ENCODE measurements at regions of chr11 and their contacts with region 1.

Region 1: GRCh38 chr11:73965076-73965860 is 14.4 kb downstream of the DNAJB13 start:
- DNase-seq: no peak
- ATAC-seq: no peak
- H3K4me3 Mint-ChIP-seq: peak overlapping the region in 2 of 10 donors; percentile 60 to 64
- H3K27ac Mint-ChIP-seq: peak overlapping the region in 8 of 10 donors; percentile 15 to 94 (median 66)
- H3K4me1 Mint-ChIP-seq: peaks cover 25 to 53% (median 45%) of the 10 kb centered on the region in 4 donors
- H3K27me3 Mint-ChIP-seq: no peaks in the 10 kb centered on the region

Region 2: DNA sequence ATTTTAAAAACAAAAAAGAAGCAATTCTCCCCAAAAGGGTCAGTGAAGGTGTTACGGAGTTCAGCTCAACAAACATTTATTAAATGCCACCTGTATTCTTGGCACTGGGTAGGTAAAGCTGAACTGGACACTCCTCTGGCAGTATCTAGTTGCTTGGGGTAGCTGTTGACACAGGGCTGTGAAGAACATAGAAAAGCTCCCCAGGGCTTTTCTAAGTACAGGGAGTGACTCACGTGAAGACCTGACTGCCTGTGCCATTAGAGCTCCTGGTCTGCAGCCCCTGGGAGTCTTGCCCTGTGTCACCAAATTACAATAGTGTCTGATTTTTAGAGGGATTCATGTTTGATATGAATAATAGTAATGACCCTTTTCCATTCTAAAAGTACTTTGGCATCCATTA is 132.2 kb before region 1 on chr11:
- POLR2A ChIA-PET with region 1: no interaction called
- DNase-seq: no peak
- ATAC-seq: no peak
- H3K4me3 Mint-ChIP-seq: no peak overlapping the region
- H3K27ac Mint-ChIP-seq: no peak overlapping the region
- H3K4me1 Mint-ChIP-seq: no peaks in the 10 kb centered on the region
- H3K27me3 Mint-ChIP-seq: no peaks in the 10 kb centered on the region

Region 3: DNA sequence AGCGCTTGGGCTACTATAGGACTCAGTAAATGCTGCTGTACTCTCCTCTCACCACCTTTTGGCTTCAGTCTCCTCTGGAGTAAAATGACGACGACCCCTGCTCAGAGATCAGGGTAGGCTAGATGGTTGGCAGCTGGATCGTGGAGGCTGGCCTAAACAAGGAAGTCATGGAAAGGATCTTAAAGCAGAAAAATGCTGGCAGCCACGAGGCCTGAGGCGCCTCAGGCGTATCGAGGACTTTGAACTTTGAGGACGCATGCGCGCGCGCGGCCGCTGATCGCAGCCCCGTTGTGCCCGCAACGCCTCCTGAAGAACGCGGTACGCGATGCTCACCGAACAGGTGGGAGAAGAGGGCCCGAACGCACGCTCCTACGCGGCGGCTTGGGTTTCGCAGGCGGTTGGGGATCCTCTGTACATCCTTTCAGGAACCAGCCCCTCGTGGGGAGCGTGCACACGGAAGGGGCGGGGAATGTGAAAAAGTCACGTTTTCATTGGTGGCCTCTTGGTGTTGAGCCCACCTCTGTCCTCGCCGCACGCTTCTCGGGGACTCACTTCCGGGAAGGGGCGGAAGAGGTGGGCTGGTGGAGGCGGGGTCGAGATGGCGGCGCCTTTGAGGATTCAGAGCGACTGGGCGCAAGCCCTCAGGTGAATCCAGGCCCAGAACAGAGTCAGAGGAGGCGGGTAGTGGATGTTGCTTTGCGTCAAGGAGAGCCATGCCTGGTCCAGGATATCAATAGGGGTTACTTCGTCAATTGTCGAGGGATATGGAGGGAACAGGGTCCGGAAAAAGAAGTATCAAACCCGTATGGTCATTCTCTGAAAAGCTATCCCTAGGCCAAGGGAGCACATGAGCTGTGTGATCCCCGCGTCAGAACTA is 88.6 kb before region 1 on chr11 and contains the starts of genes COA4 and PAAF1:
- POLR2A ChIA-PET with region 1: no interaction called
- DNase-seq: peak; percentile 85 to 96 (median 92)
- ATAC-seq: peak; percentile 96 to 97
- H3K4me3 Mint-ChIP-seq: peak within 1 kb of the TSS; percentile 93 to 99 (median 98)
- H3K27ac Mint-ChIP-seq: peak within 1 kb of the TSS; percentile 93 to 99 (median 98)
- H3K4me1 Mint-ChIP-seq: peaks cover 18 to 49% (median 44%) of the 10 kb centered on the region in 4 donors
- H3K27me3 Mint-ChIP-seq: no peaks in the 10 kb centered on the region
- polyA plus RNA-seq, gene COA4: 48.1 to 66.8 (median 61.4) TPM
- polyA plus RNA-seq, gene PAAF1: 17.7 to 30.4 (median 23.9) TPM

Region 4: DNA sequence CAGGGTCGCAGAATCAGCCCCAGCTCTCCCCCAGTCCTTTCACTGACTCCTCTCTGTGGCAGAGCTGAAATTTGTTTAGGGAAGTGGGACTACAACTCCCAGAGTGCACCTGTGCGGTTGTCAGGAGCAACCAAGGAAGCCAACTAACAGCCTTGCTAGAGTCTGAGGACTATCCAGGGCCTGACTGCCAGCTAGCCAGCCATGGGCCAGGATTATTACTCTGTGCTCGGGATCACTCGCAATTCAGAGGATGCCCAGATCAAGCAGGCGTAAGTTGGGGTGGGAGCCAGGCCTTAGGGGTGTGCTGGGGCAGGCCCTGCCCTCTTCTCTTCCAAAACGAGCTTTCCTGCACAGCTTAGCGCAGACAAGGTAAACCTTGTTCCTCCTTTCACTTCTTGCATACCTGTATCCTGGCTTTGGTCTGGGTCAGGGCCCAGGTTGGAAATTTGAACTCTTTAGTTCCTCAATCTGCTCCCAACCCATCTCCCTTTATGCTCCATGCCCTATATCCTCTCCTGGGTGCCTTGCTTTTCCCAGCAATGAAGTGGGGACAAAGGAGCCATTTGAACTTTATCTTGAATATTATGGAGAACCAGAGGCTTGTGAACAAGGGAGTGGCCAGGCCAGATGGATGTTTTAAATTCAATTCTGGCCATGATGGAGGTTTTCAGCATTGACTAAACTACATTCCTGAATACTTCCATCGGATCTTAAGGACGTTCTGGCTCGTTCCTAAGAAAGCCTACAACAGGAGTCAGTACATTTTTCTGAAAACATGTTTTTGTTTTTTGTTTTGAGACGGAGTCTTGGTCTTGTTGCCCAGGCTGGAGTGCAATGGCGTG is 14.2 kb before region 1 on chr11 and contains the start of gene DNAJB13:
- POLR2A ChIA-PET with region 1: no interaction called
- DNase-seq: peak in 1 of 10 donors; percentile 21
- ATAC-seq: no peak
- H3K4me3 Mint-ChIP-seq: no peak within 1 kb of the TSS
- H3K27ac Mint-ChIP-seq: peak within 1 kb of the TSS in 3 of 10 donors; percentile 12 to 65 (median 62)
- H3K4me1 Mint-ChIP-seq: peaks cover 0 to 3% (median under 1%) of the 10 kb centered on the region in 4 donors
- H3K27me3 Mint-ChIP-seq: peaks cover 0 to 9% (median 5%) of the 10 kb centered on the region in 5 donors
- polyA plus RNA-seq, gene DNAJB13: 0.16 to 0.51 (median 0.46) TPM

Region 5: GRCh38 chr11:73982969-73983740 is 17.9 kb after region 1 on chr11:
- POLR2A ChIA-PET with region 1: interaction called, 534 read pairs
- DNase-seq: peak; percentile 86 to 97 (median 92)
- ATAC-seq: peak; percentile 70 to 75
- H3K4me3 Mint-ChIP-seq: peak overlapping the region; percentile 95 to 100 (median 99)
- H3K27ac Mint-ChIP-seq: peak overlapping the region; percentile 98 to 100 (median 100)
- H3K4me1 Mint-ChIP-seq: peaks cover 26 to 59% (median 39%) of the 10 kb centered on the region in 4 donors
- H3K27me3 Mint-ChIP-seq: no peaks in the 10 kb centered on the region

Region 6: DNA sequence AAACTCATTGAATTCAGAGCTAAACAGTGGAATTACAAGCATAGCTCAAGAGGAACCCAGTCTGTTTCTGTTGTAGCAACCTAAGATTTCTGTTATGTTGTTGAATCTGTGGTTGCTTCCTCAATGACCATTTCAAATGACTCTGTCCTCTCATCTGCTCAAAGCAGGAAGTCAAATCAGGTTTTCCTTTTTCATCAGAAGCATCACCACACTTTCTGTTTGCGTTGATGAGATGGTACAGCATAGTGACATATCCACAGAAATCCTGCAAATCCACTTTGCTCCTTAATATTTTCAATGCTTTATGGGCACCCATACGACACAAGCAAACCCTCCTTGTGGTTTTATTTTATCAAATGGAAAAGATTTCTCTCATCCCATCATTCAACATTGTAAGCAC is 30.0 kb after region 1 on chr11:
- POLR2A ChIA-PET with region 1: interaction called, 1,033 read pairs
- DNase-seq: peak in 5 of 10 donors; percentile 38 to 93 (median 76)
- ATAC-seq: peak; percentile 65 to 75
- H3K4me3 Mint-ChIP-seq: peak overlapping the region; percentile 65 to 89 (median 80)
- H3K27ac Mint-ChIP-seq: peak overlapping the region; percentile 94 to 100 (median 98)
- H3K4me1 Mint-ChIP-seq: peaks cover 17 to 89% (median 59%) of the 10 kb centered on the region in 4 donors
- H3K27me3 Mint-ChIP-seq: no peaks in the 10 kb centered on the region

Region 7: GRCh38 chr11:74004759-74005615 is 39.7 kb after region 1 on chr11:
- POLR2A ChIA-PET with region 1: interaction called, 1,033 read pairs
- DNase-seq: peak; percentile 67 to 94 (median 87)
- ATAC-seq: peak; percentile 99 to 100
- H3K4me3 Mint-ChIP-seq: peak overlapping the region; percentile 76 to 94 (median 84)
- H3K27ac Mint-ChIP-seq: peak overlapping the region; percentile 95 to 100 (median 97)
- H3K4me1 Mint-ChIP-seq: peaks cover 33 to 85% (median 79%) of the 10 kb centered on the region in 4 donors
- H3K27me3 Mint-ChIP-seq: no peaks in the 10 kb centered on the region

Region 8: DNA sequence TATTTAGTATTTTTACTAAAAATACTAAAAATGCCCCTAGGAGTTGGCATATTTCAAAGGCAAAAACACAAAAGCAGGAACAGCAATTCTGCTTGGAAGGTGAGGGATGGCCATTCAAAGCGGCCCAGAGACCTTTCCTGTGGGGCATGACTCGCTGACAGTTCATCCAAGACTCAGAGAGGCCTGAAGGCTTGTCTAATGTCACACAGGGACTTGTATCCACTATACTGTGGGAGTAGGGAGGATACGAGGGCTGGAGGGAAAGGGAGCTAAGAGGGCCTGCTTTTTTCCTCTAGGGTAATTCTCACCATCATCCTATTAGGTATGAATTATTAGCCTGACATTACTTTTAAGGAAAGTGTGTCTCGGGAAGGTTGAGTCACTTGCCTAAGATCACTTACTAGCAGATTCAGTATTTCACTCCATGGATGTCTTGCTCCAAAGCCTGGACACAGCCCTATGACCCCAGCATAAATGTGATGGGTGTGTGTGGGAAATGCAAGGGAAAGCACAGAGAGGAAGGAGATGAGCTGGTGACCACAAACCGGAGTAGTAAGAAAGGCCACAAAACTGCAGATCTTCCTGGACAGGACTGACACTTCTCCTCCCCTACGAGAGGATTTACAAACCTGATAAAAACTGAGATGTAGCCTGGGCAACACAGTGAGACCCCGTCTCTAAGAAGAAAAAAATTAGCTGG is 60.3 kb after region 1 on chr11:
- POLR2A ChIA-PET with region 1: interaction called, 452 read pairs
- DNase-seq: no peak
- ATAC-seq: no peak
- H3K4me3 Mint-ChIP-seq: peak overlapping the region in 1 of 10 donors; percentile 55
- H3K27ac Mint-ChIP-seq: peak overlapping the region in 3 of 10 donors; percentile 22 to 73 (median 54)
- H3K4me1 Mint-ChIP-seq: peaks cover 15 to 29% (median 24%) of the 10 kb centered on the region in 4 donors
- H3K27me3 Mint-ChIP-seq: no peaks in the 10 kb centered on the region

Region 9: DNA sequence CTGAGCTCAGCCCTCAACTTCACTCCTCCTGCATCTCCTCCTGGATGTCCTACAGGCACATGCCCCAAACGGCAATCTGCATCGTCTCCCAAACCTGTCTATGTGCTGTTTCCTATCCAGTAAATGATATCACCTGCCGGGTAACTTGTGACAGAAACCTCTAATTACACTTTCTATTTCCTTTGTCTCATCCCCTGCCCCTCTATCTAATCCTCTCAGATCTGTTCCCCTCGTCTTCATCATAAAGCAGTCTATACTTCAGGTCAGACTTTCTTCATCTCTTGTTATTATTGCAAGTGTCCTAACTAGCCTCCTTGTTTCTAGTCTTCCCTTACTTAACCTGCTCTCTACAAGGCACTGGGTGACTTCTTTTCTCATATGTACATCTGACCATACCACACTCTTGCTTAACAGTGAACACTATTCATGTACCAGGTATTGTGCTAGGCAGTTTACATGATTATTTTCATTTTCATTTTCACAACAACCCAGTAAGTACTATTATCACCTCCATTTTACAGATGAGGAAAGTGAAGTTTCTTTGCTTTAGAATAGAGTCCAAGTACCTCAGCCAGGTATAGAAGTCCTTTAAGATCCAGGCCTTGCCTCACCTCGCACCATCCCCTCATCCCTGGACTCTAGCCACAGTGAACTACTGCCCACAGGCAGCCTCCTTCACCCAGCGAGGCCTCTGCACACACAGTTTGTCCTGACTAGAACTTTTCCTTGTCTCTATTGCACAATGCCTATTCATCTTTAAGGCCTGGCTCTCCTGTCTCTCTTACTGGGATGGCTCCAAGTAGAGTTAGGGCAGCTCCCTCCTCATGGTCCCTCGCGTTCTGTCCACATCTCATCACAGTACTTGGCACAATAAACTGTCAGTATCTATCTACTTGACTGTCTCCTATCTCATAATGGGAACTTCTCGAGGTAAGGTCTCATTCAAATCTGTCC is 65.7 kb after region 1 on chr11:
- POLR2A ChIA-PET with region 1: interaction called, 81 read pairs
- DNase-seq: no peak
- ATAC-seq: no peak
- H3K4me3 Mint-ChIP-seq: peak overlapping the region in 6 of 10 donors; percentile 4 to 67 (median 18)
- H3K27ac Mint-ChIP-seq: peak overlapping the region; percentile 16 to 77 (median 63)
- H3K4me1 Mint-ChIP-seq: peaks cover 14 to 34% (median 31%) of the 10 kb centered on the region in 4 donors
- H3K27me3 Mint-ChIP-seq: no peaks in the 10 kb centered on the region

Measured in naive thymus-derived CD8-positive, alpha-beta T cell (primary cell).